Left lung (tissue), 14 donors: ENCODE measurements at regions of chr5 and their contacts with region 1.

Region 1: GRCh38 chr5:80093796-80094195 is 58.6 kb downstream of the THBS4 start:
- DNase-seq: peak in 1 of 4 donors; percentile 33
- ATAC-seq: peak; percentile 69
- H3K4me3 ChIP-seq: no peak overlapping the region
- H3K27ac ChIP-seq: no peak overlapping the region
- H3K4me1 ChIP-seq: peaks cover 0 to 8% of the 10 kb centered on the region in 2 donors
- H3K27me3 ChIP-seq: no peaks in the 10 kb centered on the region
- CTCF ChIP-seq: no peak

Region 2: DNA sequence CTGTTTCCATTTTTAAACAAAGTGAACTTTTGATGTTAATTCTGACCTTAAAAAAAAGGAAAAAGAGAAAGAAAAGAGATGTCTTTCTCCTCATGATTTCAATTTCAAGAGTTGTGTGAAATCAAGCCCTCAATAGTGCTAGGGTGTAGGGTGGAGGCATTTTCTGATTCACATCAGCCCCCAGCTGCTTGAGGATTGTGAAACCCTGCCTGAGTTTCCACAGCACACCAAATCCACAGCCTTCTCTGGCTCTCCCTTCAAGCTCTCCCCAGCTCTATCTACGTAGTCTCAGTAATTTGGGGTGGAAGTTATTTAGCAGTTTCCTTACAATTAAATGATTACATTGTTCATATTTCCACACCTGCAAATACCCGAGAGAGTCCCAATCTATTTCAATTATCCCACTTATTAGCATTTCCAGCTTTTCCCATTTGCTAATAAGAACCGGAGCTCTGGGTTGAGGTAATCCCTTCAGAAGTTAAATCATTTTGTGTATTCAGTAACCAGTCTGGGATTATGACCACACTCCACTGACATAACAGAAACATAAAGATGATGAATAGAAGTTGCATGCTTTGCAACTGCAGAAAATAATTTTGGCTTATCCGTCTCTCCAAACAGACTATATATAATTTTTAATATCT is 157.7 kb before region 1 on chr5:
- intact Hi-C with region 1: no loop called
- DNase-seq: peak in 1 of 4 donors; percentile 41
- ATAC-seq: peak; percentile 76
- H3K4me3 ChIP-seq: no peak overlapping the region
- H3K27ac ChIP-seq: no peak overlapping the region
- H3K4me1 ChIP-seq: no peaks in the 10 kb centered on the region
- H3K27me3 ChIP-seq: no peaks in the 10 kb centered on the region
- CTCF ChIP-seq: no peak

Region 3: DNA sequence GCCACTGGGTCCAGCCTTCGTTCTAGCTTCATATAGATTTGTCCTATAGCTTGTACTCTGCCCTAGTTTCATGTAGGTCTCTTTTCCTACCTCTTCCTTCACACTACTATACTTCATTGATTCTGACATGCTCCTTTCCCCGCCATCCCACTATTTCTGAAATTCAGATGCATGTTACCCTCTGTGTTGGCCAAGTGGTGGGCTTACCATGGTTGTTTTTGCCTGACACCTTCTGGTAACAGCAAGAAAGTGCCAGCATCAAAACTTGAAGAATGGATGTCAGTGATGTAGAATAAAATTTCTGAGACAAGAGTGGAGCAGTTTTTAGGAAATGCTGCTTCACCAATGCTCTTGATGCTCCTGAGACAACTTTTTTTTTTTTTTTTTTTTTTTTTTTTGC is 181.6 kb after region 1 on chr5:
- intact Hi-C with region 1: loop called in 1 of 2 experiments (anchors 10 kb)
- DNase-seq: peak in 2 of 4 donors; percentile 22 to 63
- ATAC-seq: peak; percentile 56
- H3K4me3 ChIP-seq: no peak overlapping the region
- H3K27ac ChIP-seq: no peak overlapping the region
- H3K4me1 ChIP-seq: no peaks in the 10 kb centered on the region
- H3K27me3 ChIP-seq: no peaks in the 10 kb centered on the region
- CTCF ChIP-seq: no peak

Region 4: GRCh38 chr5:80308526-80308925 is 214.7 kb after region 1 on chr5:
- intact Hi-C with region 1: loop called in 1 of 2 experiments (anchors 5 kb)
- DNase-seq: no peak
- ATAC-seq: no peak
- H3K4me3 ChIP-seq: no peak overlapping the region
- H3K27ac ChIP-seq: no peak overlapping the region
- H3K4me1 ChIP-seq: no peaks in the 10 kb centered on the region
- H3K27me3 ChIP-seq: no peaks in the 10 kb centered on the region
- CTCF ChIP-seq: no peak

Region 5: DNA sequence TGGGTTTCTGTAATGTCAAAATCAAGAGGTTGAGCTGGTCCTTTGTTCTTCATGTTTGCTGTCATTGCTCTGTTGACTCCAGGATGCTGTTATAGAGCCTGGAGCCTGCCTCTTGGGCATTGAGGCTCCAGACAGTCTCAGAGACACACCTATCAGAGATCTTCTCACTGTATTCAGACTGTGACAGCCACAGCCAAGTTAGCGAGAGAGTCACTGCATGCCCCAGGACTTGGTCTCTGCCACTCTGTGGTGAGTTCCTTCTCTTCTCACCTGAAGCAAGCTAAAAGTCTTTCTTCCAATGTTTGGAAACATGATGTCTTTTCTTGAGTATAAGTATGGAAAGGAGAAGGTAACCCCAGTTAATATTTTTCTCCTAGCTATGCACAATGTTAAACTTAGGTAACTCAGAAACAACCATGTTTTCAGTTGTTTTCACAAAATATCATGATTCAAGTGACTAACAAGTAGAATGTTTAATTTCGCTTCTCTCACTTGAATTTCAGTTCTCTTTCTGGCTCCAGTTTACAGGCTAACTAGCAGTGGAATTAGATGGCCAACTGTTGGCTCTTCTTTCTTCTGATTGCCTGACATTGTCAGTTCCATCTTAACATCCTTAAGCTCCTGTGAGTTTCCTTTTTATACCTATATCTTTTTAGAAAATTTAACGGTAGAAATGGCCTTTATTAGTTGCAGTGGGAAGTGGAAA is 293.4 kb after region 1 on chr5:
- intact Hi-C with region 1: no loop called
- DNase-seq: no peak
- ATAC-seq: no peak
- H3K4me3 ChIP-seq: no peak overlapping the region
- H3K27ac ChIP-seq: no peak overlapping the region
- H3K4me1 ChIP-seq: no peaks in the 10 kb centered on the region
- H3K27me3 ChIP-seq: no peaks in the 10 kb centered on the region
- CTCF ChIP-seq: no peak